CD4-positive, alpha-beta T cell (primary cell): ENCODE measurements at regions of chr17 and their contacts with region 1.

Region 1: GRCh38 chr17:7687908-7688807 is at the start of gene WRAP53:
- DNase-seq: peak; percentile 93 to 98 (median 95)
- ATAC-seq: peak; percentile 75
- H3K4me3 ChIP-seq: peak within 1 kb of the TSS; percentile 72
- H3K4me3 Mint-ChIP-seq: peak within 1 kb of the TSS; percentile 99
- H3K27ac ChIP-seq: peak within 1 kb of the TSS; percentile 96 to 98
- H3K27ac Mint-ChIP-seq: peak within 1 kb of the TSS; percentile 100
- H3K4me1 ChIP-seq: peaks cover 38% of the 10 kb centered on the region
- H3K4me1 Mint-ChIP-seq: peaks cover 46% of the 10 kb centered on the region
- H3K27me3 ChIP-seq: no peaks in the 10 kb centered on the region
- H3K27me3 Mint-ChIP-seq: peaks cover 7% of the 10 kb centered on the region
- CTCF ChIP-seq: peak; percentile 100
- total RNA-seq, gene WRAP53: 3.9 to 4.0 TPM

Region 2: GRCh38 chr17:7014261-7014994 is 673.7 kb before region 1 on chr17:
- CTCF ChIA-PET with region 1: no interaction called
- POLR2A ChIA-PET with region 1: interaction called, 10 read pairs
- intact Hi-C with region 1: no loop called
- DNase-seq: peak; percentile 95 to 100 (median 97)
- ATAC-seq: peak; percentile 76
- H3K4me3 ChIP-seq: peak overlapping the region; percentile 99
- H3K4me3 Mint-ChIP-seq: peak overlapping the region; percentile 99
- H3K27ac ChIP-seq: peak overlapping the region; percentile 98 to 99
- H3K27ac Mint-ChIP-seq: peak overlapping the region; percentile 98
- H3K4me1 ChIP-seq: peaks cover 78% of the 10 kb centered on the region
- H3K4me1 Mint-ChIP-seq: peaks cover 68% of the 10 kb centered on the region
- H3K27me3 ChIP-seq: no peaks in the 10 kb centered on the region
- H3K27me3 Mint-ChIP-seq: no peaks in the 10 kb centered on the region
- CTCF ChIP-seq: peak; percentile 70

Region 3: GRCh38 chr17:7329374-7329996 is 358.7 kb before region 1 on chr17:
- CTCF ChIA-PET with region 1: no interaction called
- POLR2A ChIA-PET with region 1: interaction called, 27 read pairs
- intact Hi-C with region 1: no loop called
- DNase-seq: peak; percentile 90 to 99 (median 94)
- ATAC-seq: peak; percentile 73
- H3K4me3 ChIP-seq: peak overlapping the region; percentile 64
- H3K4me3 Mint-ChIP-seq: peak overlapping the region; percentile 90
- H3K27ac ChIP-seq: peak overlapping the region; percentile 80 to 92
- H3K27ac Mint-ChIP-seq: peak overlapping the region; percentile 88
- H3K4me1 ChIP-seq: peaks cover 58% of the 10 kb centered on the region
- H3K4me1 Mint-ChIP-seq: peaks cover 47% of the 10 kb centered on the region
- H3K27me3 ChIP-seq: no peaks in the 10 kb centered on the region
- H3K27me3 Mint-ChIP-seq: no peaks in the 10 kb centered on the region
- CTCF ChIP-seq: no peak

Region 4: DNA sequence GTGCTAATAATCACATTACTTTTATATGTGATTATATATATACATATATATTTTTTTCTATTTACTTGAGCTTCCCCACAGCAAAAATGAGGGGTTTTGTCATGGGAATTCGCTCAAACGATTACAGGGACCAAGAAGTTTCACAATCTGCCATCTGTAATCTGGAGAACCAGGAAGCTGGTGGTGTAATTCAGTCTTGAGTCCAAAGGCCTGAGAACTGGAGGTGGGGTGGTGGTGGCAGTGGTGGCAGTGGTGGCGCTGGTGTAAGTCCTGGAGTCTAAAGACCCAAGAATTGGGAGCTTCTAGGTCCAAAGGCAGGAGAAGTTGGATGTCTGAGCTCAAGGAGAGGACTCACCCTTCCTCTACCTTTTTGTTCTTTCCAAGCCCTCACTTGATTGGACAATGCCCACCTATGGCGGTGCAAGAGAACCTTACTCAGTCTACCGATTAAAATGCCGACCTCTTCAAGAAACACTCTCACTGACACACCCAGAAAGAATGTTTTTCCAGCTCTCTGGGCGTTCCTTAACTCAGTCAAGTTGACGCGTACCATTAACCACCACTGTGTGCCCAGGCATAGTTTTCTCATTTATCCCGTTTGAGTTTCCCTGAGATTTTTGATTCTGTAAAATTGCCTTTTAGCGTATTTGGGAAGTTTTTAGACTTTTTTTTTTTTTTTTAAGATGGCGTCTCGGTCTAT is 172.1 kb before region 1 on chr17:
- CTCF ChIA-PET with region 1: interaction called, 5 read pairs
- POLR2A ChIA-PET with region 1: interaction called, 12 read pairs
- intact Hi-C with region 1: loop called in 1 of 2 experiments (anchors 10 kb)
- DNase-seq: no peak
- ATAC-seq: no peak
- H3K4me3 ChIP-seq: no peak overlapping the region
- H3K4me3 Mint-ChIP-seq: no peak overlapping the region
- H3K27ac ChIP-seq: no peak overlapping the region
- H3K27ac Mint-ChIP-seq: no peak overlapping the region
- H3K4me1 ChIP-seq: no peaks in the 10 kb centered on the region
- H3K4me1 Mint-ChIP-seq: no peaks in the 10 kb centered on the region
- H3K27me3 ChIP-seq: no peaks in the 10 kb centered on the region
- H3K27me3 Mint-ChIP-seq: no peaks in the 10 kb centered on the region
- CTCF ChIP-seq: no peak

Region 5: GRCh38 chr17:7614422-7615264 is 73.5 kb before region 1 on chr17 and contains the start of gene FXR2:
- CTCF ChIA-PET with region 1: interaction called, 29 read pairs
- POLR2A ChIA-PET with region 1: interaction called, 158 read pairs
- intact Hi-C with region 1: loop called (anchors 1 to 2 kb)
- DNase-seq: peak; percentile 94 to 100 (median 98)
- ATAC-seq: peak; percentile 88
- H3K4me3 ChIP-seq: peak within 1 kb of the TSS; percentile 87
- H3K4me3 Mint-ChIP-seq: peak within 1 kb of the TSS; percentile 91
- H3K27ac ChIP-seq: peak within 1 kb of the TSS; percentile 50 to 63
- H3K27ac Mint-ChIP-seq: peak within 1 kb of the TSS; percentile 99
- H3K4me1 ChIP-seq: peaks cover 36% of the 10 kb centered on the region
- H3K4me1 Mint-ChIP-seq: peaks cover 47% of the 10 kb centered on the region
- H3K27me3 ChIP-seq: no peaks in the 10 kb centered on the region
- H3K27me3 Mint-ChIP-seq: no peaks in the 10 kb centered on the region
- CTCF ChIP-seq: peak; percentile 59
- total RNA-seq, gene FXR2: 20.6 to 22.5 TPM

Region 6: DNA sequence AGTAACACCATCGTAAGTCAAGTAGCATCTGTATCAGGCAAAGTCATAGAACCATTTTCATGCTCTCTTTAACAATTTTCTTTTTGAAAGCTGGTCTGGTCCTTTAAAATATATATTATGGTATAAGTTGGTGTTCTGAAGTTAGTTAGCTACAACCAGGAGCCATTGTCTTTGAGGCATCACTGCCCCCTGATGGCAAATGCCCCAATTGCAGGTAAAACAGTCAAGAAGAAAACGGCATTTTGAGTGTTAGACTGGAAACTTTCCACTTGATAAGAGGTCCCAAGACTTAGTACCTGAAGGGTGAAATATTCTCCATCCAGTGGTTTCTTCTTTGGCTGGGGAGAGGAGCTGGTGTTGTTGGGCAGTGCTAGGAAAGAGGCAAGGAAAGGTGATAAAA is 14.9 kb before region 1 on chr17:
- CTCF ChIA-PET with region 1: interaction called, 4 read pairs
- POLR2A ChIA-PET with region 1: interaction called, 47 read pairs
- intact Hi-C with region 1: no loop called
- DNase-seq: peak in 8 of 14 experiments; percentile 8 to 44 (median 19)
- ATAC-seq: no peak
- H3K4me3 ChIP-seq: no peak overlapping the region
- H3K4me3 Mint-ChIP-seq: no peak overlapping the region
- H3K27ac ChIP-seq: no peak overlapping the region
- H3K27ac Mint-ChIP-seq: no peak overlapping the region
- H3K4me1 ChIP-seq: no peaks in the 10 kb centered on the region
- H3K4me1 Mint-ChIP-seq: peaks cover 7% of the 10 kb centered on the region
- H3K27me3 ChIP-seq: no peaks in the 10 kb centered on the region
- H3K27me3 Mint-ChIP-seq: no peaks in the 10 kb centered on the region
- CTCF ChIP-seq: peak; percentile 50

Region 7: DNA sequence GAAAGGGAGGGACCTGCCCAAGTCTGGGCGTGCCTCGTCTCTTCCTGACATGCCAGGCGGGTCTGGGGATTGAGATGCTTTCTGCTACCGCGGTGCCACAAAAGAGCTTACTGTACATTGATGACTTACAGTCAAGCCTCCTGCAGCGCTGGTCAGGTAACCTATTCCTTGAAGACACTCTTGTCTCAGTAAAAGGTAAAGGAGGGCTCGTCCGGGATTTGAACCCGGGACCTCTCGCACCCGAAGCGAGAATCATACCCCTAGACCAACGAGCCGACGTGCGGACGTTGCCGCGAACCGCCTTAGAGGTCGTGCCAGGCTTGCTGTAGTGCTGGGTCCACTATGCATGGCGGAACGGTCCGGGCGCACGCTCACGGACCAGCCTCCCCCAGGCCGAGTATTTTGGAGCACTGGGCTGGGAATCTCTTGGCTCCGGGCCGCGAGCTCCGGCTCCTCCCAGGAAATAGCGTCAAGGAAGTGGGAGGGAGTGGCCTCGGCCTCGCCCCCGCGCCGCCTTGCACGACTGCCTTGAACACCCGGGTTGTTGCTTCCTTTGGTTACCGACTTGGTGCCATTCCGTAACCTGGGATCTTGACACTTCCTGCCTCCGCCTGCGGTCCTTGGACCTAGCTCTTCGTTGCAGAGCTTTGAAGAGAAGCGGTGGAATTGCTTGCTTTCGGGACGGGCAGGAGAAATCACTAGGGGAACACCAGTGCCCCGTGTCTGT is 534.6 kb after region 1 on chr17:
- CTCF ChIA-PET with region 1: no interaction called
- POLR2A ChIA-PET with region 1: interaction called, 20 read pairs
- intact Hi-C with region 1: no loop called
- DNase-seq: peak; percentile 82 to 94 (median 88)
- ATAC-seq: peak; percentile 48
- H3K4me3 ChIP-seq: peak overlapping the region; percentile 75
- H3K4me3 Mint-ChIP-seq: peak overlapping the region; percentile 98
- H3K27ac ChIP-seq: peak overlapping the region; percentile 89 to 95
- H3K27ac Mint-ChIP-seq: peak overlapping the region; percentile 99
- H3K4me1 ChIP-seq: peaks cover 75% of the 10 kb centered on the region
- H3K4me1 Mint-ChIP-seq: peaks cover 74% of the 10 kb centered on the region
- H3K27me3 ChIP-seq: no peaks in the 10 kb centered on the region
- H3K27me3 Mint-ChIP-seq: peaks cover 42% of the 10 kb centered on the region
- CTCF ChIP-seq: no peak